ENCODE measurements at regions of chr5 and their contacts with region 1.

Region 1: DNA sequence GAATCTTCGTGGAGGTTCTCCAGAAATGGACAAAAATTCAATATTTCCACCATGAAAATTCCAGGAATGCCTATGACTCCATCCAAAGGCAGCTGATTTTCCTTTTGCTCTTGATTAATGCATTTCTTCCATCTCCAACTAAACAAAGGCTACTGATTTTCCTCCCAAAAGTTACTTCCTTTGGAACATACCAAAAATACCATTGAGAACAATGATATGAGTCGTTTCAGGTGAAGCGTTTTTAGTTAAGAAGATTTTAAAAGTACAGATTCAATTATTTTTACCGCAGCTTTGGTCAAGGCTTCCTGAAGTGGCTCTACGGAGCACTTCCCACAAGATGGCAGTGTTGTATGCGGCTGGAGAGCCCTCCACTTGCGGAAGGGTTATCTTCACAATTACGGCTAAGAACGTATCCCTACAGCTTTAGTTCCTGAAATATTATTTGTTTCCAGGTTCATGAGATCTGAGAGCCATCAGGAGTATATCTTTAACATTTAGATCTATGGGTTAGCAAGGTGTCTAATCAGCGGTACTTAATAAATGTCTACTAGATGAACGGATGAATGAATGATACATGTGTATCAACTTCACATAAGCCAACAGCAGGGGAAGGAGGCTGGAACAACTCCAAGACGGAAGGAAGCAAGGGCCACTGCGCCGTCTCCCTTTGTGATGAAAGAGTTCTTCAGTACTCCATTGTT is 35.9 kb upstream of the ARSB start:
- DNase-seq: peak; percentile 45
- H3K4me3 Mint-ChIP-seq: no peak overlapping the region
- H3K27ac Mint-ChIP-seq: no peak overlapping the region
- H3K4me1 Mint-ChIP-seq: peaks cover 3% of the 10 kb centered on the region
- H3K27me3 Mint-ChIP-seq: peaks cover 62% of the 10 kb centered on the region

Region 2: DNA sequence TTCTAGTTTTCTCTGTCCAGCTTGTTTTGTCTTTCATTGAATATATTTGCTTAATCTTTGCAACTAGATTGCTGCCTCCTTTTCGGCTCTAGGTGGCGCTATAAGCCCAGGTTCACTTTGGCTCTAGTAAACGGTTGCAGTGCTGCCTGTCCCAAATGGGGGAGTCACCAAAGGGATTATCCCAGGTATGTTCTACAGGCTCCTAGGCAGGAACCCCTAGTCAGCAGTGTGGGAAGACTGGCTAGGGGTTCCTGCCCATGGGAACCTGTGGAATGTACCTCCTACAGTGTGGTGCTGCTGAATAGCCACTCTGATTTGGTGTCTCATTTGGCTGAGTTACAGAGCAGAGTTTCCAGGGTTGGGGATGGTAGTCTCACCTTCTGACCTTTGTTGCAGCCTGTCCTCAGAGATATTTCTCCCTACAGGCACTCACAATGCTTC is 121.1 kb before region 1 on chr5:
- CTCF ChIA-PET with region 1: interaction called, 14 read pairs
- POLR2A ChIA-PET with region 1: no interaction called
- DNase-seq: peak; percentile 51
- H3K4me3 Mint-ChIP-seq: no peak overlapping the region
- H3K27ac Mint-ChIP-seq: no peak overlapping the region
- H3K4me1 Mint-ChIP-seq: no peaks in the 10 kb centered on the region
- H3K27me3 Mint-ChIP-seq: no peaks in the 10 kb centered on the region

Region 3: DNA sequence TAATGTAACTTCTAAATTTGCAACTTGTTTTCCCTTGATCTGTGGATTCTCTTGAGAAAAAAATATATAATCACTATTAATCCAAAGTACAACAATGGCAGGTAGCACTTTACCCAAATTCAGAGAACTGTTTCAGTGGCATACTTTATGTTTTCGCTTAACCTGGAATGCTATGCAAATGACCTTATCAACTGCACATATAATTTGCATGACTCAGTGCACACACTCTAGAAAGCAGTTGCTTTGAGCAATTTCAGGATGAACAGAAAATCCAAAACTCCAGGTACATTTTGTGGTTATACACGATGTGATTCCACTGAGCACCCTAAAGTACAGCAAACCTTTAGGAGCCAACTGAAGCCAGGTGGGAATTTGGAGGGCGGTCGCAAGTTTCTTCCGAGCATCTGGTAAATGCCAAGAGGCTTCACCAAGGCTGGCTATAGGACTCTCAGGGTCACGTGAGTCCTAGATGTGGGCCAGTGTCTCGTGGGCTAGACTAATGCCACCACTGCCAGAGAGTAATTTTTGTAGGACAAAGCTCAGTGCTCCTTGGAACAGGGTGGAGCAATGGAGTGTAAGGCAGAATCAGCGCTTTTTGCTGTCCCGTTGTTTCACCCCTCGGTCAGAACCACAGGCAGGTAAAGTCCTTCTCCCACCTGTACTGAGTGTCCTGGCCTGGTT is 11.2 kb after region 1 on chr5:
- CTCF ChIA-PET with region 1: interaction called, 10 read pairs
- POLR2A ChIA-PET with region 1: no interaction called
- DNase-seq: no peak
- H3K4me3 Mint-ChIP-seq: no peak overlapping the region
- H3K27ac Mint-ChIP-seq: no peak overlapping the region
- H3K4me1 Mint-ChIP-seq: no peaks in the 10 kb centered on the region
- H3K27me3 Mint-ChIP-seq: peaks cover 9% of the 10 kb centered on the region

Region 4: DNA sequence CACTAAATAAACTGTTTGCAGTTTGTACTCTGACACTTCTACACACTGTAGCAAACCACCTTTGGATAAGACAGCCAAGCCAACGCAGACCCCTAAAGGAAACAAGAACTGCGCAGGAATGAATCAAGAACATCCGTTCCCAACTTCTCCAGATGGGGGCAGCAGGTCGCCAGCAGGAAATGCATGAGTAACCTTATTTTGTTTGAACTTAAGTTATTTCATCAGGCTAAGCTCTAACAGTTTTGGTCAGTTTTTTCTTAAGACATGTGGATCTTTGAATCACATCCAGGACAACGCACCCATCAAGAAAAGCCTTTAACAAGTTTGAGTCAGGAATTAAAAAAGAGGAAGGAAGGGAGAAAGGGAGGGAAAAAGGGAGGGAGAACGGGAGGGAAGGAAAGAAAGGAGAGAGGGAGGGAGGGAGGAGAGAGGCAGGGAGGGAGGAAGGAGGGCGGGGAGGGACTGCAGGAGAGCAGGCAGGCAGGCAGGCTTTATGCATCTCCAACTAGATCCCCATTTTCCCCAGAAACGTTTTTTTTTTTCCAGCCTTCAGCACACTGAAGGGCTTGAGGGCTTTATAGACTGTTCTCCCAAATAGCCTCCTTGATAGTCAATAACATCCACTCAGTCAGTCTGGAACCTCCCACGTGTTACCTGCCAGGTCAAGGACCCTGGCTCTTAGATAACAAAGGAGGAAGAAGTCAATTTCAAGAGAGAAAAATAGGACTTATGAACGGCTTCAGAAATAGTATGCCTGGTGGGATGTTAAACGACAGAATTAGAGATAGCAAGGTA is 112.8 kb after region 1 on chr5:
- CTCF ChIA-PET with region 1: interaction called, 220 read pairs
- POLR2A ChIA-PET with region 1: no interaction called
- DNase-seq: peak; percentile 69
- H3K4me3 Mint-ChIP-seq: peak overlapping the region; percentile 36
- H3K27ac Mint-ChIP-seq: peak overlapping the region; percentile 69
- H3K4me1 Mint-ChIP-seq: peaks cover 15% of the 10 kb centered on the region
- H3K27me3 Mint-ChIP-seq: no peaks in the 10 kb centered on the region

Region 5: DNA sequence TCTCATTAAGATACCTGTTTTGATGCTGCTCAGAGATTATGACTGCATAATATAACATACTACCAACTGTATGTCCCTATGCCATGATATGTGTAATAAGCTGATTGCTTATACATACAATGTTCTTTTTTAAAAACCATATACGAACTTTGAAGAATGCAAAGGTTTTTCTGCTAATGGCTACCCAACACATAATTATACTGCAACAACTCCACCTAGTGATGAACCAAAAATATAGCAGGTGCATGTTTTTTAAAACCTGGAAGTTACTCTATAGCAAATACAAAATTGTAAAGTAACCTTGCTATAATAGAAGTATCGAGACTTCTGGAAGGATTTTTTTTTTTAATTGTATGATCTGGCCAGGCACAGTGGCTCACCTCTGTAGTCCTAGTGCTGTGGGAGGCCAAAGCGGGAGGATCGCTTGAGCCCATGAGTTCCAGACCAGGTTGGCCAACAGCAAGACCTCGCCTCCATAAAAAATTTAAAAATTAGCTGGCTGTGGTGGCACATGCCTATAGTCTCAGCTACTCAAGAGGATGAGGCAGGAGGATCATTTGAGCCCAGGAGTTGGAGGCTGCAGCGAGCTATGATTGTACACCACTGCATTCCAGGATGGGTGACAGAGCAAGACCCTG is 443.8 kb after region 1 on chr5:
- CTCF ChIA-PET with region 1: interaction called, 22 read pairs
- POLR2A ChIA-PET with region 1: no interaction called
- DNase-seq: no peak
- H3K4me3 Mint-ChIP-seq: no peak overlapping the region
- H3K27ac Mint-ChIP-seq: no peak overlapping the region
- H3K4me1 Mint-ChIP-seq: no peaks in the 10 kb centered on the region
- H3K27me3 Mint-ChIP-seq: peaks cover 10% of the 10 kb centered on the region

Measured in activated CD4-positive, alpha-beta memory T cell treated with anti-CD3 and anti-CD28 coated beads, Interleukin-2, amount 10 ng/mL, durations not matched to agents 7 days and 5 days (primary cell).